ENCODE measurements at regions of chr5 and their contacts with region 1.

Region 1: GRCh38 chr5:146049014-146049703 is 56.2 kb downstream of the PLAC8L1 start:
- DNase-seq: no peak
- H3K4me3 ChIP-seq: no peak overlapping the region
- H3K27ac ChIP-seq: no peak overlapping the region
- H3K4me1 ChIP-seq: peaks cover 22% of the 10 kb centered on the region
- H3K27me3 ChIP-seq: no peaks in the 10 kb centered on the region
- CTCF ChIP-seq: peak; percentile 73

Region 2: GRCh38 chr5:145825751-145826180 is 223.4 kb before region 1 on chr5:
- intact Hi-C with region 1: loop called (anchors 10 kb)
- DNase-seq: no peak
- H3K4me3 ChIP-seq: no peak overlapping the region
- H3K27ac ChIP-seq: no peak overlapping the region
- H3K4me1 ChIP-seq: peaks cover 14% of the 10 kb centered on the region
- H3K27me3 ChIP-seq: no peaks in the 10 kb centered on the region
- CTCF ChIP-seq: peak; percentile 80

Region 3: DNA sequence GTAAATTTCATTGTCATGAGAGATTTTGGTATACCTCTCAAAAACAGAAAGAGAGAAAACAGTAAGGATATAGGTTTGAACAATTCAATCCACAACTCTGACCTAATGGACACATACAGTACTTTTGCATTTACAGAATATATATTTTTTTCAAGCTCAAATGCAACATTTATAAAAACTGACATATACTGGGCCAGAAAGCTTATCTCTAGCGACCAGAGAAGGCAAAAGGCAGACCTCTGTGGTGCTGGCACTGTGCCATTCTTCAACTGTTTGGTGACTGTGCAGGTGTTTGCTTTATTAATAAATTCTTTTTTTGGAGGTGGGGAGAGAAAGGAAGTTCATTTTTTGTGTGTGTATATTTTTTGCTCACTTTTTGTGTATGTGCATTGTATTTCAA is 62.2 kb after region 1 on chr5:
- intact Hi-C with region 1: no loop called
- DNase-seq: no peak
- H3K4me3 ChIP-seq: no peak overlapping the region
- H3K27ac ChIP-seq: no peak overlapping the region
- H3K4me1 ChIP-seq: no peaks in the 10 kb centered on the region
- H3K27me3 ChIP-seq: no peaks in the 10 kb centered on the region
- CTCF ChIP-seq: no peak

Region 4: GRCh38 chr5:146283344-146283761 is 234.2 kb after region 1 on chr5:
- intact Hi-C with region 1: no loop called
- DNase-seq: no peak
- H3K4me3 ChIP-seq: no peak overlapping the region
- H3K27ac ChIP-seq: no peak overlapping the region
- H3K4me1 ChIP-seq: peaks cover 12% of the 10 kb centered on the region
- H3K27me3 ChIP-seq: no peaks in the 10 kb centered on the region
- CTCF ChIP-seq: no peak

Measured in left ventricle myocardium inferior (tissue), 1 donor.